CD8-positive, alpha-beta T cell (primary cell): ENCODE measurements at regions of chr18 and their contacts with region 1.

Region 1: DNA sequence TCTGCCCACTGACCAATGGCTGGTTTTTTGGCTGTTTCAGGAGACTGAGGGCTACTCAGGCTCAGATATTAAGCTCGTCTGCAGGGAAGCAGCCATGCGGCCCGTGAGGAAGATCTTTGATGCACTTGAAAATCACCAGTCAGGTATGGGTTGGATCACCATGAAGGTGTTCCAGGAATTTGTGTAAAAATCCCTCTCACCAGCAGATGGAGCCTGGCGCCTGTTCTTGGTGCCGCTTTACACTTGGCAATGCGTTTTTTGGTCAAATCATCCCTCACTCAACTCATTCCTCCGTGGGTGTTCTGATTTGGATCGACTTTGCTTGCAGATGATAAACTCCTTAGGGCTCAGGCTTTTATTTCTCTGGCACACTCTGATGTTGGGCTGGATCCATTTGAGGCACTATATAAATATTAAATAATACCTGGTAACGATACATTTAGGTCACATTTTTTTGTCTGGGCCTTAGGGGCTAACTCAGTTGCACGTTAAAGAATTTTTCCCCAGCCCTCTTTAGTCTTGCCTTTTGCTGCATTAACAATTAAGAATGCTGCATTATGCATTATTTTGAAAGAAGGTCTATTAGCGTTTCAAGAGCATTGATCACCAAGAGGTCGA is 50.0 kb downstream of the HDHD2 start:
- DNase-seq: peak; percentile 29 to 73 (median 57)
- ATAC-seq: no peak
- H3K4me3 ChIP-seq: no peak overlapping the region
- H3K4me3 Mint-ChIP-seq: no peak overlapping the region
- H3K27ac ChIP-seq: no peak overlapping the region
- H3K27ac Mint-ChIP-seq: no peak overlapping the region
- H3K4me1 ChIP-seq: no peaks in the 10 kb centered on the region
- H3K4me1 Mint-ChIP-seq: no peaks in the 10 kb centered on the region
- H3K27me3 ChIP-seq: no peaks in the 10 kb centered on the region
- H3K27me3 Mint-ChIP-seq: no peaks in the 10 kb centered on the region
- CTCF ChIP-seq: peak; percentile 90

Region 2: GRCh38 chr18:45920367-45920766 is 1180.0 kb before region 1 on chr18:
- CTCF ChIA-PET with region 1: no interaction called
- POLR2A ChIA-PET with region 1: no interaction called
- intact Hi-C with region 1: no loop called
- DNase-seq: peak in 2 of 9 experiments; percentile 26 to 31
- ATAC-seq: no peak
- H3K4me3 ChIP-seq: no peak overlapping the region
- H3K4me3 Mint-ChIP-seq: no peak overlapping the region
- H3K27ac ChIP-seq: no peak overlapping the region
- H3K27ac Mint-ChIP-seq: no peak overlapping the region
- H3K4me1 ChIP-seq: peaks cover 6% of the 10 kb centered on the region
- H3K4me1 Mint-ChIP-seq: peaks cover 16% of the 10 kb centered on the region
- H3K27me3 ChIP-seq: no peaks in the 10 kb centered on the region
- H3K27me3 Mint-ChIP-seq: no peaks in the 10 kb centered on the region
- CTCF ChIP-seq: no peak

Region 3: DNA sequence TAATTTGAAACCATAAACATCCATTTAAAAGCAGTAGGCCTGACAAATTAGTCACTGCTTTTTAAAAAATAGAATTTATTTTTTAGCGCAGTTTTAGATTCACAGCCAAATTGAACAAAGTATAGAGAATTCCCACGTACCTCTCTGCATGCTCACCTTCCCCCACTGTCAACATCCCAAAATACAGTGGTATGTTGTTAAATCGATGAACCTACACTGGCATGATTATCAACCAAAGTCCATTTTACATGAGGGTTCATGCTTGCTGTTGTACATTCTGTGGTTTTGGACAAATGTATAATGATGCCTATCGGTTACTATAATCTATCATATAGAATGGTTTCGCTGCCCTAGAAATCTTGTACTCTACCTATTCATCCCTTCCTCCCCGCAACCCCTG is 59.3 kb before region 1 on chr18:
- CTCF ChIA-PET with region 1: no interaction called
- POLR2A ChIA-PET with region 1: no interaction called
- intact Hi-C with region 1: no loop called
- DNase-seq: no peak
- ATAC-seq: no peak
- H3K4me3 ChIP-seq: no peak overlapping the region
- H3K4me3 Mint-ChIP-seq: no peak overlapping the region
- H3K27ac ChIP-seq: no peak overlapping the region
- H3K27ac Mint-ChIP-seq: no peak overlapping the region
- H3K4me1 ChIP-seq: no peaks in the 10 kb centered on the region
- H3K4me1 Mint-ChIP-seq: no peaks in the 10 kb centered on the region
- H3K27me3 ChIP-seq: no peaks in the 10 kb centered on the region
- H3K27me3 Mint-ChIP-seq: peaks cover 3% of the 10 kb centered on the region
- CTCF ChIP-seq: no peak

Region 4: DNA sequence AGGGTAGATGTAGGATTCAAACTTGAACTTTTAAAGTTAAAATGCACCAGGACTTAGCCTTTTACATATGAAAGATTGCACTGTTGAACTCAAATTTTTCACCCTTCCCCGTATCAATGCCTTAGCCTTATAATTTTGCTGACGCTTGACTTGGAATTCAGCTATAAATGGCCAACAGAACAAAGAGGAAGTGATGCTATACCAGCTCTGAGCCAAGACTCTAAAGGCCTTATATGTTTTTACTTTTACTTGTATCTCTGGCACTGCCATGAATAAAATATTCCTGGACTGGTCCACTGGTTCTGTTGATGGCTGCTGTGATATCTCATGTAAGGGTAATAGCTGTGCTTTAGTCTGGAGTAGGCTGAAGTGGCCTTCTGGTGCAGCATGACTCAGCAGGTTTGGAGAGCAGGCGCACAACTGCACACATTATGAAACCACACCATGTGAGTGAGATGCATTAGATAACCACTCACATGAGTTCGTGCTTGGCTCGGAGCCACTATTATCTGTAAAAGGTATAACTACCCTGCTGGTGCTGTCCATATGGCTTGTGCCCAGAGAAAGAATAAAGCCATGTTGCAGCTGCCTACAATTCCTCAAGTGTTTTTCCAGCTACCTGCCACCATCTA is 84.2 kb after region 1 on chr18:
- CTCF ChIA-PET with region 1: no interaction called
- POLR2A ChIA-PET with region 1: no interaction called
- intact Hi-C with region 1: no loop called
- DNase-seq: peak in 1 of 9 experiments; percentile 39
- ATAC-seq: no peak
- H3K4me3 ChIP-seq: no peak overlapping the region
- H3K4me3 Mint-ChIP-seq: no peak overlapping the region
- H3K27ac ChIP-seq: no peak overlapping the region
- H3K27ac Mint-ChIP-seq: no peak overlapping the region
- H3K4me1 ChIP-seq: no peaks in the 10 kb centered on the region
- H3K4me1 Mint-ChIP-seq: no peaks in the 10 kb centered on the region
- H3K27me3 ChIP-seq: peaks cover 0 to 4% of the 10 kb centered on the region in 2 experiments
- H3K27me3 Mint-ChIP-seq: peaks cover 12% of the 10 kb centered on the region
- CTCF ChIP-seq: no peak

Region 5: DNA sequence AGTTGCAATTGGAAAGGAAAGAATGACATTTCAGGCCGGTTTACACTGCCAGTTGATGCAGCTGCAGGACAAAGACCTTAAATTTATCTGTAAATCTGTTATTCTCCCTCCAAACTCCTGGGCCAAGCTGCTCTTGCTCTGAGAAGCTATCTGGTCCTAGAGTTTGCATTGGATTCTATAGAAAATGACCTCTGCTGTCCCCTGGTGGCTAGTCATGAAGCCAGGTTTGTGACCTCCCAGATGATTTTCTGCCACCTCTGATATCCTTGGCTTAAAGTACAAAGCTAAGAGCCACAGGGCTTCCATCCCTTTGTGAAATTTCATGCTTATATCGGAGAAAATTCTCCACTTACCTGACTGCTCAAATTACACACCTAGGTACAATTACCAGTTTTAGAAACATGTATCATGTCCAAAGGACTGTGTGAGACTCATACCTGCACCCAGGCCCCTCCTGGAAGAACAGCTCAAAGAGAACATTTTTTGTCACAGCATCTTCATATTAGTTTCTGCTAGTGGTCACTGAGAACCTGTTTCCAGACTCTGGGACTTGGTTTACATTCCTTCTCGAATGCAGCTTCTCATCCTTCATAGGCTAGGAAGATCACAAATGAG is 104.7 kb after region 1 on chr18:
- CTCF ChIA-PET with region 1: interaction called, 119 read pairs
- POLR2A ChIA-PET with region 1: no interaction called
- intact Hi-C with region 1: loop called (anchors 1 kb)
- DNase-seq: peak in 6 of 9 experiments; percentile 23 to 57 (median 43)
- ATAC-seq: no peak
- H3K4me3 ChIP-seq: no peak overlapping the region
- H3K4me3 Mint-ChIP-seq: no peak overlapping the region
- H3K27ac ChIP-seq: no peak overlapping the region
- H3K27ac Mint-ChIP-seq: no peak overlapping the region
- H3K4me1 ChIP-seq: no peaks in the 10 kb centered on the region
- H3K4me1 Mint-ChIP-seq: no peaks in the 10 kb centered on the region
- H3K27me3 ChIP-seq: no peaks in the 10 kb centered on the region
- H3K27me3 Mint-ChIP-seq: peaks cover 17% of the 10 kb centered on the region
- CTCF ChIP-seq: peak; percentile 64

Region 6: DNA sequence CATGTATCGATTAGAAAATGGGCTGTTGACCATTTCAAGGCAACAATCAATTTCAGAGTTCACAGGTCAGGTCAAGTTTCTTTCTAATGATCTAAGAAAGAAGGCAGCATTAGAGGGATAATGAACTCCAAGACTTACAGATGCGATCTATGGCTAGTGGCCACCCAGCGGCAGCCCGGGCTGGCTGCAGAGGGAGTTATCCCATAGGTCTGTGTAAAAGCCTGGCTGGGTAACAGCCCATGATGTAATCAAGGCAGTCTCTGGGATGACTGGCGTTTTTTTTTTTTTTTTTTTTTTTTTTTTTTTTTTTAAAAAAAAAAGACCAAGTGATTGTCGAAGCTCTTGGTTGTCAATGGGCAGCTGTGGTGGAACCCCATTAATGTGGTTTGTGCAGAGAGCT is 322.2 kb after region 1 on chr18:
- CTCF ChIA-PET with region 1: no interaction called
- POLR2A ChIA-PET with region 1: no interaction called
- intact Hi-C with region 1: no loop called
- DNase-seq: no peak
- ATAC-seq: no peak
- H3K4me3 ChIP-seq: no peak overlapping the region
- H3K4me3 Mint-ChIP-seq: no peak overlapping the region
- H3K27ac ChIP-seq: no peak overlapping the region
- H3K27ac Mint-ChIP-seq: no peak overlapping the region
- H3K4me1 ChIP-seq: no peaks in the 10 kb centered on the region
- H3K4me1 Mint-ChIP-seq: no peaks in the 10 kb centered on the region
- H3K27me3 ChIP-seq: peaks cover 0 to 1% of the 10 kb centered on the region in 2 experiments
- H3K27me3 Mint-ChIP-seq: peaks cover 5% of the 10 kb centered on the region
- CTCF ChIP-seq: no peak

Region 7: GRCh38 chr18:48022531-48023329 is 922.4 kb after region 1 on chr18:
- CTCF ChIA-PET with region 1: no interaction called
- POLR2A ChIA-PET with region 1: no interaction called
- intact Hi-C with region 1: loop called in 1 of 2 experiments (anchors 5 kb)
- DNase-seq: peak in 2 of 9 experiments; percentile 44 to 63
- ATAC-seq: peak; percentile 49
- H3K4me3 ChIP-seq: no peak overlapping the region
- H3K4me3 Mint-ChIP-seq: no peak overlapping the region
- H3K27ac ChIP-seq: no peak overlapping the region
- H3K27ac Mint-ChIP-seq: no peak overlapping the region
- H3K4me1 ChIP-seq: no peaks in the 10 kb centered on the region
- H3K4me1 Mint-ChIP-seq: peaks cover 5% of the 10 kb centered on the region
- H3K27me3 ChIP-seq: peaks cover 0 to 4% of the 10 kb centered on the region in 2 experiments
- H3K27me3 Mint-ChIP-seq: peaks cover 18% of the 10 kb centered on the region
- CTCF ChIP-seq: peak; percentile 37